CD8-positive, alpha-beta T cell (primary cell): ENCODE measurements at regions of chr5 and their contacts with region 1.

Region 1: DNA sequence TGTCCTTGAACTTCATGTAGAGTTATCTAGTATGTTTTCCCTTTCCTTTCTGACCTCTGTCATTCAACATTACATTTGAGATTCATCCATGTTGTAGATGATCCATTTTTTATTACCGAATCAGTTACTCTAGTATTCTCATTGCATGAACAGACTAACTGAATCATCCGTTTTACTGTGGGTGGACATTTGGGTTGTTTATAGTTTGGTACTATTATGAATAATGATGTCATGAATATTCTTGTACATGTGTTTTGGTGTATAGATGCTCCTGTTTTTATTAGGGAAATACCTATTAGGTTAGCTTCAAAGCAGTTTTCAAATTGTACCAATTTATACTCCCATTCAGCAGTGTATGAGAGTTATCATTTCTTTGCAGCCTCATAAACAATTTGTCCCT is 94.3 kb upstream of the NIPAL4 start:
- DNase-seq: no peak
- ATAC-seq: no peak
- H3K4me3 ChIP-seq: no peak overlapping the region
- H3K4me3 Mint-ChIP-seq: no peak overlapping the region
- H3K27ac ChIP-seq: no peak overlapping the region
- H3K27ac Mint-ChIP-seq: peak overlapping the region; percentile 10
- H3K4me1 ChIP-seq: no peaks in the 10 kb centered on the region
- H3K4me1 Mint-ChIP-seq: no peaks in the 10 kb centered on the region
- H3K27me3 ChIP-seq: no peaks in the 10 kb centered on the region
- H3K27me3 Mint-ChIP-seq: no peaks in the 10 kb centered on the region
- CTCF ChIP-seq: no peak

Region 2: DNA sequence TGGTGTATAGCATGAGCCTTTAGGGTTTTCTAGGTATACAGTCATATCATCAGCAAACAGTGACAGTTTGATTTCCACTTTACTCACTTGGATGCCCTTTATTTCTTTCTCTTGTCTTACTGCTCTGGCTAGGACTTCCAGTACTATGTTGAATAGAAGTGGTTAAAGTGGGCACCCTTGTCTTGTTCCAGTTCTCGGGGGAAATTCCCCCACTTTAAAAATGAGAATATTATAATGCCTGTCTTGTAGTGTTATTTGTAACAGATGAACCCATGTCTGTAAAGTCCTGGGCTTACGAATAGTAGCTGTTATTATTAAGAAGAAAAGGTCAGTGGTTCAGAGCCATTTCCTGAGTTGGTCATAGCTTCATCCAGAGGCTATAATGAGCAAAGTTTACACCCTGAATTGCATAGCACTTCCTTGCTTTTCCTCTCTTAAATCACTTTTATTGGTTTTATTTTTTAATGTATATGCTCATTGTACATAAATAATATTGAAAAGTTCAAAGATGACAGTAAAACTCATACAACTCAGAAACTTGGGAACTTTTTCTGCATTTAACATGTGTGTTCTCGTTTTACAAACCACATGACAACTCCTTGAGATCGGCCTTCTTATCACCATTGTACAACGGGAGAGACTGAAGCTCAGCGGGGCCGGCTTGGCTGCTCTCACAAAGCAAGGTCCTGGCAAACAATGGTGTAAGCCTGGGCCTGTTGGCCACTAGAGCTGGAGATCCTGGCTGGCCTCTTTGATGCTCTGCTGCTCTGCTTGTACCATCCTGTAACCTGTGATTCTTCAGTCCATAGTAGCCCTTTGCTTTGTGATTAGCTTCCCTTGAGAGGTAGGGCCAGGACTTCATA is 14.6 kb before region 1 on chr5:
- CTCF ChIA-PET with region 1: no interaction called
- POLR2A ChIA-PET with region 1: no interaction called
- intact Hi-C with region 1: loop called in 1 of 2 experiments (anchors 2 kb)
- DNase-seq: no peak
- ATAC-seq: no peak
- H3K4me3 ChIP-seq: no peak overlapping the region
- H3K4me3 Mint-ChIP-seq: no peak overlapping the region
- H3K27ac ChIP-seq: peak overlapping the region in 1 of 2 experiments; percentile 43
- H3K27ac Mint-ChIP-seq: peak overlapping the region; percentile 80
- H3K4me1 ChIP-seq: no peaks in the 10 kb centered on the region
- H3K4me1 Mint-ChIP-seq: peaks cover 30% of the 10 kb centered on the region
- H3K27me3 ChIP-seq: no peaks in the 10 kb centered on the region
- H3K27me3 Mint-ChIP-seq: no peaks in the 10 kb centered on the region
- CTCF ChIP-seq: no peak